ENCODE measurements at regions of chr18 and their contacts with region 1.

Region 1: DNA sequence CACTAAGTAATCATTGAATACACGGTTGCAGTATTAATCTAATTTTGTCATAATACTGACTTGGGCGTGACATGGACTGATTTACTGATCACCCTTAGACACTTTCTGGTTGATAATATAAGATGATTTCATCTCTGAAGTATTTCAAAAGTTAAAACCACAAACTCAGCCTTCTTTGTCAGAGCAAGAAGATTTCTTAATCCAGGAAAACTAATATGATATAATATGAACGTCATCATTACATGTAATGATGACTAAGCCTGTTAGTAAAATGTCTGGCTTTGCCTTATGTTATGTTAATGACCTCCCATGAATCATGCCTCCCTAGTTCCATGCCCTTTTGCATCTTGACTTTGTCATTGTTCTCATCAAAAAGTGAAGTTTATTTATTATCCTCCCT is 1325.0 kb upstream of the CDH2 start:
- DNase-seq: peak; percentile 59
- H3K4me3 Mint-ChIP-seq: no peak overlapping the region
- H3K27ac Mint-ChIP-seq: no peak overlapping the region
- H3K4me1 Mint-ChIP-seq: peaks cover 8% of the 10 kb centered on the region
- H3K27me3 Mint-ChIP-seq: no peaks in the 10 kb centered on the region
- CTCF ChIP-seq: no peak

Region 2: DNA sequence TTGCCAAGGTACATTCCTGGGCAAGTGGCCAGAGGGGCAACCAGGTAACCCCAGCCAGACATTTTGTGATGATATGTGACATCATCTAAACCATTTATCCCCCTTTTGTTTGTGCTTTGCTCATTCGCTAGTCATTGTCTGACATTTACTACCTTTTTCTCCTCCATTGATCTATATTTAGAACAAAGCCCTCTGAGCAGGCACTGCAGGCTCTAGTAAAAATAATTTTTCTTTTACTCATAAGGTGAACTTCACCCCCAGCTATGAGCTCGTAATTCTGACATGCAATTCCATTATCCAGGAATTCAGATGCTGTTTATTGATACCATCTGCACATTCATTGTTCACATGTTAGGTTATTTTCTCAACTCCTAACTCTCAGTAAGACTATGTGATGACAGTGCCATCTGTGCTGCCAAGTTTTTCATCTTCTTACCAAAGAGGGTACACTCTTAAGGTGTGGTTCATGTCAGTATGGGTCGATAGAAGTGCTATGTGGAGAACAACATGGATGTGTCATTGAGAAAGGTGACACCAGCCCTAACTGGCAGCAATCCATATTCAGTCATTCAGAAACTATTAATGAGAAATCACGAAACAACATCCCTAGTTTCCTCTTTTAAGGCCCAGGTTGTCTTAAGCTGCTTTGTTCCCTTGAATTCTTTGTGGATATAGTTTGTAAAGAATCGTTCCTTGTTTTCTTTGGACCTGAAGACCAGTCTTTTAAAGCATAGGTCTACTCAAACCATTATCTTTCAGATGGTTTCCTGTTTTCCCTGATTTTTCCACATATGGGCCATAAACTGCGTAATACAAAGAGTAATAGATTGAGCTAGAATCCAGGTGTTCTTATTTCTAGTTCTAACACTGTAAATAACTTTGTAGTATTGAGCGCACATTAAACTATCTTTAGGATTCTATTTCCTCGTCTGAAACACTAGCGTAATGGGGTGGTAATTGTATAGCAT is 346.9 kb before region 1 on chr18:
- CTCF ChIA-PET with region 1: no interaction called
- POLR2A ChIA-PET with region 1: no interaction called
- intact Hi-C with region 1: loop called (anchors 10 kb)
- DNase-seq: peak; percentile 74
- H3K4me3 Mint-ChIP-seq: peak overlapping the region; percentile 41
- H3K27ac Mint-ChIP-seq: peak overlapping the region; percentile 76
- H3K4me1 Mint-ChIP-seq: peaks cover 51% of the 10 kb centered on the region
- H3K27me3 Mint-ChIP-seq: no peaks in the 10 kb centered on the region
- CTCF ChIP-seq: no peak

Region 3: GRCh38 chr18:29378651-29379136 is 123.3 kb before region 1 on chr18:
- CTCF ChIA-PET with region 1: no interaction called
- POLR2A ChIA-PET with region 1: no interaction called
- intact Hi-C with region 1: no loop called
- DNase-seq: no peak
- H3K4me3 Mint-ChIP-seq: no peak overlapping the region
- H3K27ac Mint-ChIP-seq: no peak overlapping the region
- H3K4me1 Mint-ChIP-seq: peaks cover 1% of the 10 kb centered on the region
- H3K27me3 Mint-ChIP-seq: no peaks in the 10 kb centered on the region
- CTCF ChIP-seq: no peak

Region 4: DNA sequence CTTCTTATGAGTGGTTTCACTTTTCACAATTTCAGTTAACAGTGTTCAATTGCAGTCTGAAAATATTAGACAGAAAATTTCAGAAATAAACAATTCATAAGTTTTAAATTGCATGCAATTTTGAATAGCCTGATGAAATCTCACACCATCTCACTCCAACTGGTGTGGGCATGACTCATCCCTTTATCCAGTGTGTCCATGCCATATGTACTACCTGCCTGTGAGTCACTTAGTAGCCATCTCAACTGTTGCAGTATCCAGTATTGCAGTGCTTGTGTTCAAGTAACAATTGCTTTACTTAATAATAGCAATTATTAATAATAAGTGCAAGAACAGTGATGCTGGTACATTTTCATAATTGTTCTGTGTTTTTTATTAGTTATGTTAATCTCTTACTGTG is 338.1 kb after region 1 on chr18:
- CTCF ChIA-PET with region 1: no interaction called
- POLR2A ChIA-PET with region 1: interaction called, 3 read pairs
- intact Hi-C with region 1: loop called (anchors 10 kb)
- DNase-seq: peak; percentile 90
- H3K4me3 Mint-ChIP-seq: no peak overlapping the region
- H3K27ac Mint-ChIP-seq: peak overlapping the region; percentile 19
- H3K4me1 Mint-ChIP-seq: peaks cover 11% of the 10 kb centered on the region
- H3K27me3 Mint-ChIP-seq: no peaks in the 10 kb centered on the region
- CTCF ChIP-seq: no peak